ENCODE measurements at regions of chr6 and their contacts with region 1.

Region 1: DNA sequence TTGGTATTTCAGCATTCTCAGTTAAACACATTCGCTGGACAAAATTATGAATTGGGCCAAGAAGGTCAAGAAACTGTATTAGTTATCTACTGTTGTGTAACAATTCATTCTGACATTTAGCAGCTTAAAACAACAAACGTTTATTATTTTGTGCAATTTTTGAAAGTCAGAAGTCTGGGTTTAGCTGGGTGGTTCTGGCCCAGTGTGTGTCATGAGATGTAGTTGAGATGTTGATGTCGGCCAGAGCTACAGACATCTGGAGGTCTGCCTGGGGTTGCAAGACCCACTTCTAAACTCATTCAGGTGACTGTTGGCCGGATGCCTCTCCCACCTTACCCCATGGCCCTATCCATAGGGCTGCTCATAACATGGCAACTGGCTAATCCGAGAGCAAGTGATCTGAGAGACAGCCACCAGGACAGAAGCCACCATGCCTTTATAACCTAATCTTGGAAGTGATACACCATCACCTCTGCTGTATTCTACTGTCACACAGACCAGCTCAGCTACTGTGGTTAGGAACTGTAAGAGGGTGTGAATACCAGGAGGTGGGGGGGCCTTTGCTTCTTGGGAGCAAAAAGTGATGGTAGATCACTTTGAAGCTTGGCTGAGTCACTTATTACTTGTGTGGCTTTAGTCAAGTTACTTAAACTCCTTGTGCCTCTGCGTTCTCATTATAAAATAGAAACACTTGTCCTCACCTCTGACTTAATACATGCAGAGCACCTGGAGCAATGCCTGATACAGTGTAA is 217.0 kb upstream of the MYLIP start:
- DNase-seq: no peak
- H3K4me3 Mint-ChIP-seq: peak overlapping the region; percentile 56
- H3K27ac Mint-ChIP-seq: peak overlapping the region; percentile 89
- H3K4me1 Mint-ChIP-seq: peaks cover 67% of the 10 kb centered on the region
- H3K27me3 Mint-ChIP-seq: no peaks in the 10 kb centered on the region

Region 2: DNA sequence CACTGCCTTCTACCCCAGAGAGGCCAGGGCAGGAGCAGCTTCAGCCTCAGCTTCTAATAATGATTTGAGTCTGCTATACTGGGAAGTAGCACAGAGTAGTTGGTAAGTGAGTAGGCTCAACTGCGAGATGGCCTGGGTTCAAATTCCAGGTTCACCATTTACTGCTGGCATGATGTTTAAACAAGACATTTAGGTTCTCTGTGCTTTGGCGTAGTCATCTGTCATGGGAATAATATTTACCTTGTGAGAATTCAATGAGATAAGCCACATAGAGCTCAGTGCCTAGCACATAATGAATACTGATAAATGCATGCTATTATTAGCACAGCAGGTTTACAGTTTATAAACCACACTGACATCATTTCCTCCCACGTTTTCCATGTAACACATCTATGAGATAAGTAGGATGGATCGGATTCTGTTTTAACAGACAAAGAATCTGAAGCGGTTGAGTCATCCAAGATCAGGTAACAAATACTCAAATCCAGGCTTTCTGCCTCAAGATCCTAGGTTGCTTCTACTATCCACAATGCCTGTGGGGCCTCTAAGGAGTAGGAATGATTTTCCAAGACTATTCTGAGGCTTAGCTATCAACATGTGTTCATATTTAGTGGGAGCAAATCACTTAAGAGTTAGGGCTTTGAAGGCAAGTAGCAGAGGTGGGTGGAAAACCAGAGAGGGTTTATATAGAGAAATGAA is 176.2 kb before region 1 on chr6:
- intact Hi-C with region 1: loop called (anchors 2 kb)
- DNase-seq: no peak
- H3K4me3 Mint-ChIP-seq: peak overlapping the region; percentile 59
- H3K27ac Mint-ChIP-seq: peak overlapping the region; percentile 83
- H3K4me1 Mint-ChIP-seq: peaks cover 54% of the 10 kb centered on the region
- H3K27me3 Mint-ChIP-seq: no peaks in the 10 kb centered on the region

Region 3: GRCh38 chr6:15901141-15902115 is 10.5 kb before region 1 on chr6:
- intact Hi-C with region 1: loop called (anchors 1 kb)
- DNase-seq: peak; percentile 64
- H3K4me3 Mint-ChIP-seq: peak overlapping the region; percentile 24
- H3K27ac Mint-ChIP-seq: peak overlapping the region; percentile 99
- H3K4me1 Mint-ChIP-seq: peaks cover 69% of the 10 kb centered on the region
- H3K27me3 Mint-ChIP-seq: no peaks in the 10 kb centered on the region

Region 4: DNA sequence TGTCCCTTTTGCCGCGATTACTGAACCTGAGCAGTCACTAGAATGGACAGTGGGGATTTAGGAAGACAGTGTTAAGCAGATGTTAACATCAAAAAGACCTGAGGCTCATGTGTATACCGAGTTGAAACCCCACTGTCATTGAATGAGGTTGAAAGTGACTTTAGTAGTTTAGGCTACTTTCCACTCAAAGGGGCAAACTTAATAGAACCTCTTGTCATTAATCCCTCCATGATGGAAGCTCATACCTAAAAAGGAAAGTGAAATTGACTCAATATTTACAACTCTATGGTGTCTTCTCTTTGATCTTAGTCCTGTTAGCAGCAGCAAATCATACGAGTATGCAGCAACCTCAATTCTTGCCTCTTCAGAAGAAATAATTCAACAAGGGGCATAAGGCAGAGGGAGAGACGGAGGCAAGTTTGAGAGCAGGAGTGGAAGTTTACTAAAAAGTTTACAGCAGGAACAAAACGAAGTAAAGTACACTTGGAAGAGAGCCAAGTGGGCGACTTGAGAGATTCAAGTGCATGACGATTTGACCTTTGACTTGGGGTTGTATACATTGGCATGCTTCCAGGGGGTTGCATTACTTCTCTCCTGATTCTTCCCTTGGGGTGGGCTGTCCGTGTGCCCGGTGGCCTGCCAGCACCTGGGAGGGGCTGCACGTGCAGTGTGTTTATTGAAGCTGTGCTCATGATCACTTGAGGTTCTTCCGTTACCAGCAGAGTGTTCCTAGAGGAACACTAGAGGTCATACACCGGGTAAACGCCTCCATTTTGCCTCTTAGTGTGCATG is 44.2 kb after region 1 on chr6:
- intact Hi-C with region 1: no loop called
- DNase-seq: no peak
- H3K4me3 Mint-ChIP-seq: no peak overlapping the region
- H3K27ac Mint-ChIP-seq: no peak overlapping the region
- H3K4me1 Mint-ChIP-seq: peaks cover 48% of the 10 kb centered on the region
- H3K27me3 Mint-ChIP-seq: no peaks in the 10 kb centered on the region

Region 5: DNA sequence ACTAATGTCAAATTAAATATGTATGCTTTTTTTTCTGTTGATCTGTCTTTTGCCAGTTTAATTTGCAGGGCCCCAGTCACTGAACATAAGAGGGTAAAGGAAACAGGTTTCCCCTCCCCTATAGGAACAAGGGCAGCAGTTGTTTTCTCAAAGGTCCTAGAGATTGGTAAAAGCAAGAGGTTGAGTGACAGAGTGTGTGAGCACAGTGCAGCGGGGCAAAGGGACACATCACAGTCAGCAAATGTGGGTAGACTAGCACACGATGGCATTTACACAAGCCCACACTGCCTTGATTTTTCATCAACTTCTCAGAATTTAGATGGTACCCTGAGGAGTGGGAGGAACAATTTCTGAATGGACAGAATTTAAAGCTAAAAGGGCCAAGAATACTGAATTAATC is 78.2 kb after region 1 on chr6:
- intact Hi-C with region 1: loop called (anchors 1 kb)
- DNase-seq: no peak
- H3K4me3 Mint-ChIP-seq: no peak overlapping the region
- H3K27ac Mint-ChIP-seq: peak overlapping the region; percentile 79
- H3K4me1 Mint-ChIP-seq: peaks cover 50% of the 10 kb centered on the region
- H3K27me3 Mint-ChIP-seq: no peaks in the 10 kb centered on the region

Region 6: DNA sequence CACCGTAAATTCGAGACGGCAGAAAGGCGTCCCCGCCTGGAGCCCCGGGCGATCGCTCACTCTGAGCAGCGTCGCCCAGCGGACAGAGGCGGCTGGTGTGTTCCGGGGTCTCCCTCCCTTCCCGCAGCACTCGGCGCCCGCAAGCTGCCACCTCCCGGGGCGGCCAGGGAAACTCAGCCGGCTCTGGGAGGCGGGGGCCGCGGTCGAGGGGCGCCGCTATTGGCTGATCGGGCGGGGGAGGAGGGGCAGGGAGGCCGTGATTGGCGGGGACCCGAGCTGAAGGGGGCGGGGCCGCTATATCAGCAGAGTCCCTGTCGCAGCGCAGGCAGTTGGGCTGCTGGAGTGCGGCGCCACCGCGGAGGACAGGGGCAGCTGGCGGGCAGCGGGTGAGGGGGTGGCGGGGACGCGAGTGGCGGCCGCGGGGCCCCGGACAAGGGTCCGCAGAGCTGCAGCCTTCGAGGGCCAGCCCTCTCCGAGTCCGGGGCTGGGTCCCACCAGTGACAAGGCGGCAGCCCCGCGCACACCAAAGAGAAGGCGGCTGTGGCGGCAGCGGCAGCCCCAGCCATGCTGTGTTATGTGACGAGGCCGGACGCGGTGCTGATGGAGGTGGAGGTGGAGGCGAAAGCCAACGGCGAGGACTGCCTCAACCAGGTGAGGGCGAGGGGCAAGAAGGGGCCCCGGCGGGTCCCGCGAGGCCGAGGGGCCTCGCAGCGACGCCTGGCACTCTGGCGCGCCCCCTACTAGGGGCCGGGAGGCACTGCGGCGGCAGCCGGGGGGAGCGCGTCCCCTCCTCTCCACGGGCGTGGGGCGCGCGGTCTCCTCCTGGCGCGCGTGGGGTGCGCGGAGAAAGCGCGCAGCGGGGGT is 217.1 kb after region 1 on chr6 and contains the start of gene MYLIP:
- intact Hi-C with region 1: loop called (anchors 1 kb)
- DNase-seq: peak; percentile 94
- H3K4me3 Mint-ChIP-seq: peak within 1 kb of the TSS; percentile 90
- H3K27ac Mint-ChIP-seq: peak within 1 kb of the TSS; percentile 86
- H3K4me1 Mint-ChIP-seq: peaks cover 25% of the 10 kb centered on the region
- H3K27me3 Mint-ChIP-seq: peaks cover 16% of the 10 kb centered on the region
- total RNA-seq, gene MYLIP: 81.2 and 83.1 TPM in 2 replicates